ENCODE measurements at regions of chr5 and their contacts with region 1.

Region 1: GRCh38 chr5:81751009-81751835 is at the start of gene SSBP2:
- DNase-seq: peak; percentile 99 to 100
- H3K4me3 ChIP-seq: peak within 1 kb of the TSS; percentile 85 to 97 (median 94)
- H3K27ac ChIP-seq: peak within 1 kb of the TSS; percentile 90 to 100 (median 96)
- H3K4me1 ChIP-seq: peaks cover 11 to 70% (median 42%) of the 10 kb centered on the region in 4 donors
- H3K27me3 ChIP-seq: peaks cover 0 to 4% (median 0%) of the 10 kb centered on the region in 3 donors
- CTCF ChIP-seq: peak in 1 of 7 experiments; percentile 12
- EP300 ChIP-seq: peak; percentile 80
- POLR2A ChIP-seq: peak in 1 of 4 donors; percentile 49
- total RNA-seq, gene SSBP2: 0.87 to 86.2 (median 37.3) TPM

Region 2: GRCh38 chr5:81425569-81425968 is 325.7 kb before region 1 on chr5:
- intact Hi-C with region 1: no loop called
- DNase-seq: peak in 1 of 2 donors; percentile 60
- H3K4me3 ChIP-seq: no peak overlapping the region
- H3K27ac ChIP-seq: peak overlapping the region in 2 of 5 donors; percentile 11 to 44
- H3K4me1 ChIP-seq: peaks cover 0 to 33% (median 8%) of the 10 kb centered on the region in 4 donors
- H3K27me3 ChIP-seq: no peaks in the 10 kb centered on the region
- CTCF ChIP-seq: peak in 5 of 7 experiments; percentile 19 to 64 (median 36)
- EP300 ChIP-seq: no peak
- POLR2A ChIP-seq: no peak

Region 3: DNA sequence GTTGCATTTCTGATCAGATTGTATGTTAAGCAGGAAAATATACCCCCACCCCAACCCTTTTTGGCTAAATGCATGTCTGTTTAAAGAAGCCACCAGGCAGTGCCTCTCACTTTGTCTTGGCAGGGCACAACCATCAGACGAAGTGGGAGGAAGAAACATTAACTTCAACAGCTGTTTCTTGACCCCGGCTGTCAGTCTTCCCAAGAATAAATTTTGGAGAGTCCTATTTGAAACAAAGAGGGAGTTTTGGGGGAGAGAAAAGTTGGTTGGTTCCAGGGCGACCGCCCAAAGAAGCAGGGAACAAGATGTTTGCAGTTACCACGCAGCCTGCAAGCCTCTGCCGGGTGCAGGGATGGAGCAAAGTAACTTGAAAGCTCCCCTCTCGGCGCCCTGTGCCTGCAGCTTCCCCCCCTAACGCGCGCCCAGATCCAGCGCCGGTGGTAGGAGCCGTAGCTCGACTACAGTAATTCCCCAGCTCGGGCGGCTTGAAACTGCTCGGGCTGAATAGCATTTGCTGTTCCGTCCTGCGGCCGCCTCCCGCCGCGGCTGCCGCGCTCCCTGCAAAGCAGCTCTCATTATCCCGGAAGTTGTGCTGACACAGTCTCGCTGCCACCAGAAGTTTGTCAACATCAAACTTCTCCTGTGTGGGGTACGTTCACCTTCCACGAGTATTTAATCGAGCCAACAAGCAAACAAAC is 100.4 kb after region 1 on chr5:
- intact Hi-C with region 1: loop called (anchors 5 kb)
- DNase-seq: peak; percentile 96 to 99
- H3K4me3 ChIP-seq: peak overlapping the region; percentile 47 to 53 (median 51)
- H3K27ac ChIP-seq: peak overlapping the region; percentile 85 to 91 (median 89)
- H3K4me1 ChIP-seq: peaks cover 24 to 74% (median 54%) of the 10 kb centered on the region in 4 donors
- H3K27me3 ChIP-seq: no peaks in the 10 kb centered on the region
- CTCF ChIP-seq: no peak
- EP300 ChIP-seq: peak; percentile 80
- POLR2A ChIP-seq: no peak

Measured in stomach (tissue), 19 donors.